ENCODE measurements at regions of chr6 and their contacts with region 1.

Region 1: GRCh38 chr6:33788694-33789549 is at the start of gene LEMD2:
- DNase-seq: peak; percentile 92
- H3K4me3 Mint-ChIP-seq: peak within 1 kb of the TSS; percentile 93
- H3K27ac Mint-ChIP-seq: peak within 1 kb of the TSS; percentile 96
- H3K4me1 Mint-ChIP-seq: peaks cover 43% of the 10 kb centered on the region
- H3K27me3 Mint-ChIP-seq: peaks cover 3% of the 10 kb centered on the region
- total RNA-seq, gene LEMD2: 63.6 and 64.4 TPM in 2 replicates

Region 2: GRCh38 chr6:33271458-33272274 is 517.3 kb before region 1 on chr6 and contains the starts of genes RPS18 and VPS52:
- intact Hi-C with region 1: loop called (anchors 5 kb)
- DNase-seq: peak; percentile 89
- H3K4me3 Mint-ChIP-seq: peak within 1 kb of the TSS; percentile 97
- H3K27ac Mint-ChIP-seq: peak within 1 kb of the TSS; percentile 99
- H3K4me1 Mint-ChIP-seq: peaks cover 55% of the 10 kb centered on the region
- H3K27me3 Mint-ChIP-seq: no peaks in the 10 kb centered on the region
- total RNA-seq, gene RPS18: 2,930 and 2,946 TPM in 2 replicates
- total RNA-seq, gene VPS52: 59.8 and 63.5 TPM in 2 replicates

Region 3: GRCh38 chr6:33579828-33580714 is 208.9 kb before region 1 on chr6 and contains the start of gene BAK1:
- intact Hi-C with region 1: loop called (anchors 2 kb)
- DNase-seq: peak; percentile 81
- H3K4me3 Mint-ChIP-seq: peak within 1 kb of the TSS; percentile 90
- H3K27ac Mint-ChIP-seq: peak within 1 kb of the TSS; percentile 90
- H3K4me1 Mint-ChIP-seq: peaks cover 43% of the 10 kb centered on the region
- H3K27me3 Mint-ChIP-seq: no peaks in the 10 kb centered on the region
- total RNA-seq, gene BAK1: 67.0 and 67.9 TPM in 2 replicates

Region 4: GRCh38 chr6:33812669-33813068 is 23.7 kb after region 1 on chr6:
- intact Hi-C with region 1: loop called (anchors 2 kb)
- DNase-seq: peak; percentile 28
- H3K4me3 Mint-ChIP-seq: no peak overlapping the region
- H3K27ac Mint-ChIP-seq: no peak overlapping the region
- H3K4me1 Mint-ChIP-seq: peaks cover 12% of the 10 kb centered on the region
- H3K27me3 Mint-ChIP-seq: peaks cover 45% of the 10 kb centered on the region

Region 5: GRCh38 chr6:33904050-33904746 is 115.3 kb after region 1 on chr6:
- intact Hi-C with region 1: loop called (anchors 2 kb)
- DNase-seq: peak; percentile 89
- H3K4me3 Mint-ChIP-seq: peak overlapping the region; percentile 73
- H3K27ac Mint-ChIP-seq: peak overlapping the region; percentile 89
- H3K4me1 Mint-ChIP-seq: peaks cover 81% of the 10 kb centered on the region
- H3K27me3 Mint-ChIP-seq: peaks cover 2% of the 10 kb centered on the region

Region 6: DNA sequence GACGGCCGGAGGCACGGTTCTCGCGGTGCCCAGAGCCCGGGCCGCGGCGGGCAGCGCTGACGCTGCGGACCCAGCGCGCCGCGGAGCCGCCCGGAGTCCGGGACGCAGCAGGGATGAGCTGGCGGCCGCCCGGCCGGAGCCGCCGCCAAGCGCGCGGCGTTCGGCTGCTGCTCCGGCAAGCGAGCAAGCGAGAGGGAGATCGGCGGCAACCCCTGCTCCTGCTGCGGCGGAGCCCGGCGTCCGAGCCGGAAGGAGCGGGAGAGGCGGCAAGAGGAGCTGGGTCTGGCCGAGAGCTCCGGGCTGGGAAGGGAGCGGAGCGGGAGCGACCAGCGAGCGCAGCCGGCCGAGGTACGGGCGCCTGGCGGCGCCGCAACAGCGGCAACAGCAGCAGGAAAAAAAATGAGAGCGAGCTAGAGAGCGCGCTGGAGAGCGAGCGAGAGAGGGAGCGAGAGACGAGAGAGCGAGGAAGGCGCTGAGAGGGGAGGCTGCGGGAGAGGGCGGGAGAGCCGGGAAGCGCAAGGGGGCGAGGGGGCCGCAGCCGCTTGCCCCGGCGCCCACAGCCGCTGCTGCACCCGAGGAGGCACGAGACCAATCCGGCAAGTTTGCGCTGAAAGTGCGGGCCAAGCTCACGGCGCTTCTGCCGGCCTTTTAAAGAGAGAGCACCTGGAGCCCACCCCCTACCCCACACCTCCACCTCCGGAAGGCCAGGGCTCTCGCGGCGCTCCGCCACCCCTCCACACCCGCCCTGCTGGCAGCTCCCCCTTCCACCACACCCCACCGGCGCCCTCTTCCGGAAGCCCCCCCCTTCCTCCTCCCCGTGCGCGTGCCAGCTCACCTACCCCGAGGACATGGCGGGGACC is 356.5 kb after region 1 on chr6:
- intact Hi-C with region 1: no loop called
- DNase-seq: no peak
- H3K4me3 Mint-ChIP-seq: no peak overlapping the region
- H3K27ac Mint-ChIP-seq: no peak overlapping the region
- H3K4me1 Mint-ChIP-seq: no peaks in the 10 kb centered on the region
- H3K27me3 Mint-ChIP-seq: peaks cover 67% of the 10 kb centered on the region

Region 7: GRCh38 chr6:34392497-34393190 is 603.7 kb after region 1 on chr6 and contains the start of gene NUDT3:
- intact Hi-C with region 1: loop called (anchors 10 kb)
- DNase-seq: peak; percentile 93
- H3K4me3 Mint-ChIP-seq: peak within 1 kb of the TSS; percentile 97
- H3K27ac Mint-ChIP-seq: peak within 1 kb of the TSS; percentile 88
- H3K4me1 Mint-ChIP-seq: peaks cover 18% of the 10 kb centered on the region
- H3K27me3 Mint-ChIP-seq: peaks cover 3% of the 10 kb centered on the region
- total RNA-seq, gene NUDT3: 20.0 and 20.8 TPM in 2 replicates

Region 8: DNA sequence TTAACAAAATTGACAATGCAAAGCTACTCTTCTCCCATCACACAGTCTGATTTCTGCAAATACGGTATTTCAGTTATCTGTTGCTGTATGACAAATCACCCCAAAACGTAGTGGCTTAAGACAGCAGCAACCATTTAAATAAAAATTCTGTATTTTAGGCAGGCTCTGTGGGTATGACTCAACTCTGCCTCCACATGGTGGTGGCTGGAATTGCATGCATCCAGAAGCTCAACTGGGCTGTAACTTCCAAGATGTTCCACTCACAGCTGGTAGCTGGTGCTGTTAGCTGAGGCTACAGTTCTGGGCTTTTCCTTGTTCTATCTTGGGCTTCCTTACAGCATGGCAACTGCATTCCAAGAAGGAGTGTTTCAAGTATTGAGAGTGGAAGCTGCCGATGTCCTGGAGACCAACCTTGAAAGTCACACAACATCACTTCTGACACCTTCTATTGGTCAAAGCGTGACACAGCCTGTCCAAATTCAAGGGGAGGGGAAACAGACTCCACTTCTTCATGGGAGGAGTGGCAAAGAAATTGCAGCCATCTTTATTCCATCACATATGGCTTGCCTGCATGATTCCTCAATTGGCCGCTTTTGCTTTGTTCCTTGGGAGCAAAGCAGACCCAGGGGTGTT is 1763.5 kb after region 1 on chr6:
- intact Hi-C with region 1: no loop called
- DNase-seq: peak; percentile 40
- H3K4me3 Mint-ChIP-seq: no peak overlapping the region
- H3K27ac Mint-ChIP-seq: no peak overlapping the region
- H3K4me1 Mint-ChIP-seq: no peaks in the 10 kb centered on the region
- H3K27me3 Mint-ChIP-seq: peaks cover 14% of the 10 kb centered on the region